ENCODE measurements at regions of chrX and their contacts with region 1.

Region 1: DNA sequence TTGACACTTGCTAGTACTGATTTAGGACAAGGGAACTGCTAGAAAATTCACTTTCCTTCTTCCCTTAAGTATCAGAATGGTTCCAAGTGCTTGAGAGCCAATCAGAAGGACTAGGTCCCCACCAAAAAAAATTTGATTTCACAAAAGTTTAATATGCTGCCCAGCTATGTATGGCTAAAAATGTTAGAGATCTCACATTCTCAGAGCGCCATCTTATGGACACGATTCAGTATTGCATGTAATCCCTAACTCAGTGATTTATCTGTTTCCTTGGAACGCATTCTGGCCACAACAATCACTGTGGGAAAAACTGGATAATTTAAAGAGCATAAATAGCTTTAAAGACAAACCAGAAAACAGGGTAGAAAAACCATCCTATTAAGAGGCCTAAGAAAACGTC is 255.1 kb upstream of the GPC4 start:
- DNase-seq: peak; percentile 33 to 40 (median 38)
- ATAC-seq: 0 out of 3 replicates have a peak, but pooled peaks have one; percentile 35
- H3K4me3 ChIP-seq: no peak overlapping the region
- H3K27ac ChIP-seq: no peak overlapping the region
- H3K4me1 ChIP-seq: no peaks in the 10 kb centered on the region
- H3K27me3 ChIP-seq: no peaks in the 10 kb centered on the region
- CTCF ChIP-seq: peak; percentile 42 to 71 (median 62); a peak in 5 of 6 replicates
- EP300 ChIP-seq: no peak
- POLR2A ChIP-seq: no peak
- RAD21 ChIP-seq: peak; percentile 69 to 75

Region 2: DNA sequence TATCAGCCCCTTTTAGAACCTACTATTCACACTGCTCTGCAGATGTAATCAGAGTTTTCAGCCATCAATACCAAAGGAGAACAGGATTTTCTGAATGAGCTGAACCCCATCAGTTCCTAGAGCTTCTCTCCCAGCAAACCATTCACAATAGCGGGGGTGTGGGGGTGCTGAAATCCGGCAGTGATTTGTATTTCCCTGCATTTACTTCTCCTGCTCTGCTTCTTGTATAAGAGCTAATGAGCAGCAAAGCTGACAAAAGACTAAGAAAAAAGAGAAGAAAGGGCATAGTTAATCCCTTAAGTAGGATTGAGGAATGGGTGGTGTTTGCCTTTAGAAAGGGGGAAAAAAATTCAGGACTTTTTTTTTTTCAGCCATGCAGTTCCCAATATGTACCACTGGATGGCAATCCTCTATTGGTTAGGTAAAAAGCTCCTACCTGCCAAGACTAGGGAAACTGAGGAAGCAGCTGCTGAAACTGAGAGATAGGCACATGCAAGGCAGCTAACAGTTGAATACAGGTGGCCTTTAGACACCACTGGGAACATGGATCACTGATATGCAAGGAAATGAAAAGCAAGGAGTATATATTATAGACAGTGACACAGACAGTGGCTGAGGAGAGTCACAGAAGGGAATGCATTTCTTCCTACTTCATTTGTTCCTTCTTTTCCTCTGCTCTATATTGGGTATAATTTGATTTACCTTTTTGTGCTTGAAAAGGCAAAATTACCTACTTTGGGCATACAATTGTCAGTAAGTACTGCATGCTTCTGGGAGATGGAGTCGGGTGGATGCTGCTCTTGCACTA is 929.9 kb before region 1 on chrX:
- CTCF ChIA-PET with region 1: no interaction called
- POLR2A ChIA-PET with region 1: no interaction called
- in situ Hi-C with region 1: no loop called
- intact Hi-C with region 1: loop called (anchors 5 kb)
- DNase-seq: peak in 2 of 4 experiments; percentile 19 to 27
- ATAC-seq: no peak
- H3K4me3 ChIP-seq: no peak overlapping the region
- H3K27ac ChIP-seq: no peak overlapping the region
- H3K4me1 ChIP-seq: no peaks in the 10 kb centered on the region
- H3K27me3 ChIP-seq: no peaks in the 10 kb centered on the region
- CTCF ChIP-seq: peak; percentile 45 to 54 (median 50)
- EP300 ChIP-seq: no peak
- POLR2A ChIP-seq: no peak
- RAD21 ChIP-seq: peak; percentile 14 to 46; a peak in 2 of 4 replicates

Region 3: GRCh38 chrX:132999150-132999549 is 671.2 kb before region 1 on chrX:
- CTCF ChIA-PET with region 1: no interaction called
- POLR2A ChIA-PET with region 1: no interaction called
- in situ Hi-C with region 1: loop called (anchors 25 kb)
- intact Hi-C with region 1: no loop called
- DNase-seq: no peak
- ATAC-seq: no peak
- H3K4me3 ChIP-seq: no peak overlapping the region
- H3K27ac ChIP-seq: no peak overlapping the region
- H3K4me1 ChIP-seq: no peaks in the 10 kb centered on the region
- H3K27me3 ChIP-seq: no peaks in the 10 kb centered on the region
- CTCF ChIP-seq: no peak
- EP300 ChIP-seq: no peak
- POLR2A ChIP-seq: no peak
- RAD21 ChIP-seq: no peak

Region 4: GRCh38 chrX:133005066-133005465 is 665.3 kb before region 1 on chrX:
- CTCF ChIA-PET with region 1: no interaction called
- POLR2A ChIA-PET with region 1: no interaction called
- in situ Hi-C with region 1: no loop called
- intact Hi-C with region 1: loop called (anchors 1 kb)
- DNase-seq: peak; percentile 4 to 23 (median 8)
- ATAC-seq: peak; percentile 51; the same call in 2 of the 3 replicates
- H3K4me3 ChIP-seq: no peak overlapping the region
- H3K27ac ChIP-seq: no peak overlapping the region
- H3K4me1 ChIP-seq: no peaks in the 10 kb centered on the region
- H3K27me3 ChIP-seq: no peaks in the 10 kb centered on the region
- CTCF ChIP-seq: peak; percentile 42 to 65 (median 63); a peak in 5 of 6 replicates
- EP300 ChIP-seq: no peak
- POLR2A ChIP-seq: no peak
- RAD21 ChIP-seq: peak; percentile 22 to 51; a peak in 3 of 4 replicates

Region 5: DNA sequence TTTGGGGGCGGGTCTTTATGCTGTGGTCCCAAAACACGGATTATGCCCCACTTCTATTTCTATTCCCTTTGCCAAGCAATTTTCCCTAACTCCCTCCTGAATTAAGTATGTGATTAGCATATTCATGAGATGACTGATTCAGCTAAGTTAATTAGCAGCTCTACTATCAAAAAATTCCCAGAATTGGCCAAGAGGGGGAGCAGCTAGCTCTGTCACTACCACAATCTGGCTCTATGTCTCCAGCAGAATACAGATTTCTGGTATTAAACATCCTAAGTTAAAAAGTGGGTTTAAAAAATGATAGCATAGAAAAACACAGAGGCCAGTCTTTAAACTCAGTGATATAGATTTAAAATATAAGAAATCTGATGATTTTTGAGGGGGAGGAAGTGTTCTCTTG is 335.4 kb before region 1 on chrX:
- CTCF ChIA-PET with region 1: interaction called, 4 read pairs
- POLR2A ChIA-PET with region 1: no interaction called
- in situ Hi-C with region 1: no loop called
- intact Hi-C with region 1: loop called (anchors 2 kb)
- DNase-seq: peak; percentile 12 to 23 (median 20)
- ATAC-seq: peak; percentile 66; the same call in 2 of the 3 replicates
- H3K4me3 ChIP-seq: no peak overlapping the region
- H3K27ac ChIP-seq: no peak overlapping the region
- H3K4me1 ChIP-seq: no peaks in the 10 kb centered on the region
- H3K27me3 ChIP-seq: no peaks in the 10 kb centered on the region
- CTCF ChIP-seq: peak; percentile 27 to 54 (median 42); a peak in 4 of 6 replicates
- EP300 ChIP-seq: no peak
- POLR2A ChIP-seq: no peak
- RAD21 ChIP-seq: peak in 1 of 2 experiments; percentile 31; a peak in 1 of 4 replicates

Region 6: DNA sequence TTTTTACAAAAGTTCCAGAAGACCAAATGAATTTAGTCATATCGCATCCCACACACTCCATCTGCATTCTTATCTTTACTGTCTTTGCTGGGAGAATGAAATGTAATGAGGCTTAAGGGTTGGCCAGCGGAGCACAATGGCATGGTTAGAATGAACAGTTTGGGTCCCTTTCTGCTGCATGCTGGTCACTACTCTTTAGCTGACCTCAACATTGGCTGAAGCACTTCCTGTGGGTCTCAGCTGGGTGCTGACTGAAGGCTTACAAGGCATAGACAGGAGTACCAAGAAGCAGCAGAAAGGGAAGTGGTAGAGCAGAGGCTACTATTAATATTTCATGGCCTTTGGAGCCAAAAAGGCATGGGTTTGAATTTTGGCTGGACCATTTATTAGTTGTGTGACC is 95.7 kb before region 1 on chrX:
- CTCF ChIA-PET with region 1: no interaction called
- POLR2A ChIA-PET with region 1: no interaction called
- in situ Hi-C with region 1: no loop called
- intact Hi-C with region 1: no loop called
- DNase-seq: no peak
- ATAC-seq: no peak
- H3K4me3 ChIP-seq: no peak overlapping the region
- H3K27ac ChIP-seq: no peak overlapping the region
- H3K4me1 ChIP-seq: no peaks in the 10 kb centered on the region
- H3K27me3 ChIP-seq: no peaks in the 10 kb centered on the region
- CTCF ChIP-seq: no peak
- EP300 ChIP-seq: no peak
- POLR2A ChIP-seq: no peak
- RAD21 ChIP-seq: no peak

Measured in K562 (cell line).